HEK293 (cell line): ENCODE measurements at regions of chr15 and their contacts with region 1.

Region 1: GRCh38 chr15:38354315-38354929 is 99.5 kb upstream of the FAM98B start:
- H3K4me3 ChIP-seq: no peak overlapping the region
- H3K27ac ChIP-seq: no peak overlapping the region
- H3K4me1 ChIP-seq: no peaks in the 10 kb centered on the region
- CTCF ChIP-seq: peak; percentile 45

Region 2: DNA sequence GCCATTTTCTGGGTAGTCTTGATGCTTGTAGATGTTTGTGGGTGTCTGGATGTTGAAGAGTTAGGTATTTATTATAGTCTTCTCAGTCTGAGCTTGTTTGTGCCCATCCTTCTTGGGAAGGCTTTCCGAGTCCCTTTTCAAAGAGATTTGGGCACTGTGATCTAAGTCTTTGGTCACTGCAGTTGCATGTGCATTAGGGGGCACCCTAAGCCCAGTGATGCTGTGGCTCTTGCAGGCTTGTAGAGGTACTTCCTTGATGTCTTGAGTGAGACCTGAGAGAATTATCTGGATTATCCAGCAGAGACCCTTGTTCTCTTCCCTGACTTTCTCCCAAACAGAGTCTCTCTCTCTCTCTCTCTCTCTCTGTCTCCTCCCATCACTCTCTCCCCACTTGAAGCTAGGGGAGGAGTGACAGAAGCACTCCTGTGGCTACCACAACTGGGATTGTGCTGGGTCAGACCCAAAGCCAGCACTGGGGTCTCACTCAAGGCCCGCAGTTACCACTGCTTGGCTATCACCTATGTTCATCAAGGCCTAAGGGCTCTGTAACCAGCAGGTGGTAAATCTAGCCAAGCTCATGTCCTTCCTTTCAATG is 351.4 kb before region 1 on chr15:
- CTCF ChIA-PET with region 1: interaction called, 14 read pairs
- POLR2A ChIA-PET with region 1: no interaction called
- H3K4me3 ChIP-seq: no peak overlapping the region
- H3K27ac ChIP-seq: no peak overlapping the region
- H3K4me1 ChIP-seq: no peaks in the 10 kb centered on the region
- CTCF ChIP-seq: peak; percentile 57

Region 3: DNA sequence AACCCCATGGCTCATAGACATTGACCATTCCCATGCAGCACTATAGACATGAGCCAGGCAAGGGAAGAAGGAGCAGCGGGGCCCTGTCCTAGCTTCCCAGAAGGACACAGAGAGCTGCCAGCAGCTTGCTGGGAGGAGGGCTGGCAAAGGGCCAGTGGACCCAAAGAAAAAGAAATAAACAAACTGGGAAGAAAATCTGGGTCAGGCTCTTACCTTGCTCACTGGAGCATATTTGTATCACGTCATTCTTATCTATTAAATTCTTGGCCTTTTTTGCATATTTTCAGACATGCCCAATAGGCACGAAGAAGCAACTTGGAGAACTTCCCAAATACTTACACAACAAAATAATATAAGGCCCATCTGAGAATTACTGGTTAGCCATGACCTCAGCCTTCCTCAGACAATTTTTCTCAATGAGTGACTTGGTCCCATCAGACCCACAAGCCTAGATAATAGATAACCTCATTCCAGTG is 181.8 kb after region 1 on chr15:
- CTCF ChIA-PET with region 1: no interaction called
- POLR2A ChIA-PET with region 1: no interaction called
- H3K4me3 ChIP-seq: no peak overlapping the region
- H3K27ac ChIP-seq: no peak overlapping the region
- H3K4me1 ChIP-seq: peaks cover 8% of the 10 kb centered on the region; the same call in 1 of the 2 replicates
- CTCF ChIP-seq: no peak